A673 (cell line): ENCODE measurements at regions of chr7 and their contacts with region 1.

Region 1: DNA sequence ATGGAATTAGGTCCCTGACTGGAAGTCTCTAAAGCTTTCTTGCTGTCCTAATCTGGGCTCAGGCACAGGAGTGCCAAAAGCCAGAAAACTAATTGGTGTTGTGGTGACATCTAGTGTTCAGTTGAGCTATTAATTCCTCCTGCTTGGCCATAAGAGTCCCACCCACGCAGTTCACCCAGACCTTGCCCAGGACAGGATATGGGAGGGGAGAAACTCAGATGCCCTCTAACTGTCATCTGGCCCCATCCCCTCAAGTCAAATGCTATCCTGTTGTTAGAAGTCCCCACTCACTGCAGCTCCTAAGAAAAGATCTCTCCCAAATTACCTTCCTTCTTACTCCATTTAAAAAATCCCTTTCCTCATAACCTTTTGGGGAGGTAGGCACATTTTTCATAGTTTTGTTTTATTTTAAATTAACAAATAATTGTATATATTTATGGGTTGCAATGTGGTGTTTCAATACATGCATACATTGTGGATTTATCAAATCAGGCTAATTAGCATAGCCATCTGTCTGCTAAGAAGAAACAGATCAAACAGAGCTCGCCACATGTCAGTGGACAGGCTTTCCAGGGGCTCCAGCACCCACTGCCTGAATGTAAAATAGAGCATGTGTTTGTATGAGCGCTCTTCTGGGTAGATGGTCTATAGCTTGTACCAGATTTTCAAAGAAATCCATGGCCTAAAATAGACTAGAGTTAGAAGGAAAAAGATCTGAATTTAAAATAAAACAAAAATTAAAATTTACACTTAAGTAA is 84.0 kb downstream of the GSAP start:
- DNase-seq: peak; percentile 90
- H3K4me3 ChIP-seq: no peak overlapping the region
- H3K27ac ChIP-seq: no peak overlapping the region
- H3K4me1 ChIP-seq: peaks cover 44% of the 10 kb centered on the region
- H3K27me3 ChIP-seq: no peaks in the 10 kb centered on the region
- CTCF ChIP-seq: peak; percentile 68

Region 2: DNA sequence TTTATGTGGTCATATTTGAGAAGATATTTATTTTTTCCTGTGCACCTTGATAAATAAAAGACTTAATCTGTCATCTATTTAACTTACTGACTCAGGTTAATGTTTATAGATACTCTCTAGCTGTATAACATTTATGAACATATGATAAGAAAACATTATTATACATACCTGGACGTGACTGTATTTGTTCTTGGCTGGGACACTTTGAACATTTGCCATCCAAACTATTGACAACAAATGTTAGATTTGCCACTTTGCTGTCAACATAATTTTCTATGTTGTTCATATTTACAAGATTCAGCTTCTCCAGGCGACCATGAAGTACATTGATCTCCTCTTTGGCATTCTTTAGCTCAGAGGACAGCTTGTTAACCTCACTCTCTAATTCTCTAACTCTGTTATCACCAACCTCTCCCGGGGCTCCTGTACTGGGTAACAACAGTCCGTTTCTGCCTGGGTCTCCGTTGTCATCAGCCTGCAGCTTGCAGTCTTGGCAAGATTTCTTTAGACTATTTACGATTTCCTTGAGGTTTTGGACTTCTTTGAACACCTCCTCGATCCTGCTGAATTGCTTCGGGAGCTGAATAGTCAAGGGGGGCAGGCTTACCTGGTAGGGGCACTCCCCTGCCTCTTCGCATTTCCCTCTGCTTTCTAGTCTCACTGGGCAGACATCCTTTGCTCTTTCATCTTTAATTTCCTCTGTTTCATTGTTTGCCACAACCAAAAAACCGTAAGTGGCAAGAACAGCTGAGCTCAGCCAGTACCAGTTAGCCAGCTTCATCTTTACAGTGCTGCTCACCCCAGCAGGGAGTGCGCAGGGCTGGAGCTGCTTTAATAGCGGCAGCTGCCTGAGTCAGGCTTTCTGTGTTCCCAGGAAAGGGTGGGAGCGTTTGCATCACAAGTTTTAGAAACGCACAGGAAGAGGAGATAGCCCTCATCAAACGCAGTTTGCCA is 132.8 kb before region 1 on chr7 and contains the start of gene FGL2:
- CTCF ChIA-PET with region 1: no interaction called
- POLR2A ChIA-PET with region 1: no interaction called
- intact Hi-C with region 1: loop called (anchors 5 kb)
- DNase-seq: peak; percentile 55
- H3K4me3 ChIP-seq: no peak within 1 kb of the TSS
- H3K27ac ChIP-seq: no peak within 1 kb of the TSS
- H3K4me1 ChIP-seq: no peaks in the 10 kb centered on the region
- H3K27me3 ChIP-seq: no peaks in the 10 kb centered on the region
- CTCF ChIP-seq: no peak
- total RNA-seq, gene FGL2: not detected in 2 replicates

Region 3: GRCh38 chr7:77247206-77247850 is 84.8 kb before region 1 on chr7:
- CTCF ChIA-PET with region 1: interaction called, 20 read pairs
- POLR2A ChIA-PET with region 1: no interaction called
- intact Hi-C with region 1: loop called (anchors 5 kb)
- DNase-seq: peak; percentile 79
- H3K4me3 ChIP-seq: no peak overlapping the region
- H3K27ac ChIP-seq: no peak overlapping the region
- H3K4me1 ChIP-seq: no peaks in the 10 kb centered on the region
- H3K27me3 ChIP-seq: no peaks in the 10 kb centered on the region
- CTCF ChIP-seq: peak; percentile 85

Region 4: GRCh38 chr7:77627309-77627676 is 295.2 kb after region 1 on chr7:
- CTCF ChIA-PET with region 1: no interaction called
- POLR2A ChIA-PET with region 1: no interaction called
- intact Hi-C with region 1: no loop called
- DNase-seq: no peak
- H3K4me3 ChIP-seq: no peak overlapping the region
- H3K27ac ChIP-seq: no peak overlapping the region
- H3K4me1 ChIP-seq: no peaks in the 10 kb centered on the region
- H3K27me3 ChIP-seq: no peaks in the 10 kb centered on the region
- CTCF ChIP-seq: no peak